OCI-LY7 (cell line): ENCODE measurements at regions of chr5 and their contacts with region 1.

Region 1: GRCh38 chr5:61658592-61659008 is 326.5 kb downstream of the ZSWIM6 start:
- DNase-seq: peak; percentile 62
- H3K4me3 ChIP-seq: no peak overlapping the region
- H3K27ac ChIP-seq: no peak overlapping the region
- H3K4me1 ChIP-seq: no peaks in the 10 kb centered on the region
- CTCF ChIP-seq: peak; percentile 95

Region 2: DNA sequence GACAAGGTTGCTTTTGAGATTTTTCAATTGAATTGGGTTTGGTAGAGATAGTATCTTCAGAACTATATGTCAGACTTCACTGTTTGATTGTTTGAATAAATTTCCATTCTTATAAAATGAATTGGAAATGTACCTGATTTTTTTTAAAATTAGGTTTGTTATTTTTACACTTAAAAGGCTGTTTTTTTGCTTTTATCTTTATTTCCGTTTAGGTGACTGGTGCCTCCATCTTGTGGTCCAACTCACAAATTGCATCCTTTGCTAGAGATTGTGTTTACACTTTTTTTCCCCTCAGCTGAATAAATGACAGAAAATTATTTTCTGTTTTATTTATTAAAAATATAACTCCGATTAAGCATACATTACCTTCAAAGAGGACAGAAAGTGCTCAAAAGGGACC is 698.0 kb before region 1 on chr5:
- CTCF ChIA-PET with region 1: no interaction called
- POLR2A ChIA-PET with region 1: no interaction called
- intact Hi-C with region 1: loop called (anchors 1 kb)
- DNase-seq: peak; percentile 31
- H3K4me3 ChIP-seq: no peak overlapping the region
- H3K27ac ChIP-seq: no peak overlapping the region
- H3K4me1 ChIP-seq: no peaks in the 10 kb centered on the region
- CTCF ChIP-seq: peak; percentile 85

Region 3: GRCh38 chr5:61617995-61618525 is 40.5 kb before region 1 on chr5:
- CTCF ChIA-PET with region 1: no interaction called
- POLR2A ChIA-PET with region 1: no interaction called
- intact Hi-C with region 1: no loop called
- DNase-seq: no peak
- H3K4me3 ChIP-seq: no peak overlapping the region
- H3K27ac ChIP-seq: no peak overlapping the region
- H3K4me1 ChIP-seq: no peaks in the 10 kb centered on the region
- CTCF ChIP-seq: no peak